Right cardiac atrium (tissue), 5 donors: ENCODE measurements at regions of chr9 and their contacts with region 1.

Region 1: DNA sequence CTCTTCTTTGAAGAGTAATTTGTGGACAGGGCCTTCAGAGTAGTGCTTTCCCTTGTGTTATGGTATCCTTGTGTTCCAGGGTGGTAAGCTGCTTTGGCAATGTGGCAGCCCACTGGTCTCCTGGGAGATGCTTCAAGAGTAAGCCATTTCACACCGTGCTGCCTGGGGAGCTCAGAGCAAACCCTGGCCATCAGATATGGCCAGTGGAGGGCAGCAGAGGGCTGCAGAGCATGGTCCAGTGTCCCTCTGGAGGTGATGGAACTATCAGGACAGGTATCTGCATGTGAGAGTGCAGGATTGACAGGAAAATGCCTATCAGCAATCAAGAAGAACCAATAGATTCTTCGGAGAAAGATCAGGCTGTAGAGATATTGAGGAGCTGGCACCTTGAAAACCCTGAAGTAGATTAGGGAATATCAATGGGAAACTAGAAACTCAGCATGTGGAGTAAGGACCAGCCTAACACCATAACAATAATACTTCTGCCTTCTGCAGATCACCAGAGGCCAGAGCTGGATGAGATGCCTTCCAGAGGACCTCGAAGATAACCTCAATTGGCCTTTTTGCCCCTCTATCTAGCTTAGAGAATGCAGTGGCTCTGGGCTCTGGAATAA is 90.8 kb downstream of the PLPPR1 start:
- DNase-seq: peak in 2 of 3 donors; percentile 55 to 56
- ATAC-seq: peak; percentile 59 to 70
- H3K4me3 ChIP-seq: no peak overlapping the region
- H3K27ac ChIP-seq: no peak overlapping the region
- H3K4me1 ChIP-seq: no peaks in the 10 kb centered on the region
- H3K27me3 ChIP-seq: no peaks in the 10 kb centered on the region

Region 2: GRCh38 chr9:101212661-101213060 is 93.3 kb after region 1 on chr9:
- intact Hi-C with region 1: no loop called
- DNase-seq: no peak
- ATAC-seq: no peak
- H3K4me3 ChIP-seq: no peak overlapping the region
- H3K27ac ChIP-seq: no peak overlapping the region
- H3K4me1 ChIP-seq: no peaks in the 10 kb centered on the region
- H3K27me3 ChIP-seq: no peaks in the 10 kb centered on the region

Region 3: DNA sequence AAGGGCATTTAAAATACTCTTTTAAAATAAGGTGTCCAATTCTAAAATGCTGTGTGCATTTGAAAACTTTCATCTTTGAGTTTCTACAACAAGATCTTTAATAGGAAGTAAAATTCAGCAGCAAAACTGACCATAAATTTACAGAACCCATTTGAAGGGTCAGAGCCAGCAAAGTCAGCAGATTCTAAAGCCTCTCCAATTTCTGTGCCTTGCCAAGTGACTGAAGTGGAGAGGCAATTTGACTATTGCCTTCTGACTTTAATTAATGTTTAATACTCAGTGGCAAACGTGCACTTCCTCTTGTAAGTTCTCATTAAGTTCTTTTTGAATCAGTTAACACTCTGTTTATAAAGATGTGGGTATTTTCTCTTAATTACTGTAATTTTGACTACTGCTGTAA is 110.3 kb after region 1 on chr9:
- intact Hi-C with region 1: loop called in 1 of 4 experiments (anchors 5 kb)
- DNase-seq: no peak
- ATAC-seq: no peak
- H3K4me3 ChIP-seq: no peak overlapping the region
- H3K27ac ChIP-seq: no peak overlapping the region
- H3K4me1 ChIP-seq: no peaks in the 10 kb centered on the region
- H3K27me3 ChIP-seq: no peaks in the 10 kb centered on the region

Region 4: GRCh38 chr9:101235105-101235866 is 116.0 kb after region 1 on chr9:
- intact Hi-C with region 1: loop called in 3 of 4 experiments (anchors 5 kb)
- DNase-seq: no peak
- ATAC-seq: no peak
- H3K4me3 ChIP-seq: no peak overlapping the region
- H3K27ac ChIP-seq: no peak overlapping the region
- H3K4me1 ChIP-seq: no peaks in the 10 kb centered on the region
- H3K27me3 ChIP-seq: no peaks in the 10 kb centered on the region